ENCODE measurements at regions of chr4 and their contacts with region 1.

Region 1: GRCh38 chr4:17018013-17018412 is 119.6 kb upstream of the LDB2 start:
- DNase-seq: peak in 1 of 2 donors; percentile 26
- H3K4me3 ChIP-seq: no peak overlapping the region
- CTCF ChIP-seq: no peak
- POLR2A ChIP-seq: no peak

Region 2: DNA sequence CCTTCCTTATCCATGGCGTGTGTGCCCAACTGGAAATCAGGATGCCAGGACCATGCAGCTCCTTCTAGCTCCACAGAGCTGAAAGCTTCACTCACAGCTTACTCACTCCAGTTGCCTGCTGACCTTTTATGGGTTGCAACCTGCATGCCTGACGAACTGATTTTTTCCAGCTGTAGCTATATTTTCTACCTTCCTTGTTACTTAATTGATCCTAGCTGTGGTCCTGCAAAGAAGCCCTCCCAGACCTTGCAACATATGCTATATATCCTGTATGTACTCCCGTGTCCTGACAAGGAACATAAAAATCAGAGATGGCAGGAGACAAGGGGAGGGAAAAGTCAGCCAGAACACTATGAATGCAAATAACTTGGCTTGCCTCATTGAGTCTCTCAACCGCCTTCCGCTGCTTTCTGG is 15.8 kb after region 1 on chr4:
- intact Hi-C with region 1: loop called (anchors 2 kb)
- DNase-seq: no peak
- H3K4me3 ChIP-seq: no peak overlapping the region
- CTCF ChIP-seq: no peak
- POLR2A ChIP-seq: no peak

Region 3: GRCh38 chr4:18777190-18777589 is 1759.2 kb after region 1 on chr4:
- intact Hi-C with region 1: no loop called
- DNase-seq: no peak
- H3K4me3 ChIP-seq: no peak overlapping the region
- CTCF ChIP-seq: no peak
- POLR2A ChIP-seq: no peak